ENCODE measurements at regions of chr6 and their contacts with region 1.

Region 1: GRCh38 chr6:26249957-26250697 is 114.9 kb upstream of the BTN3A2 start:
- DNase-seq: peak; percentile 74
- ATAC-seq: peak; percentile 53
- H3K4me3 Mint-ChIP-seq: peak overlapping the region; percentile 96
- H3K27ac Mint-ChIP-seq: peak overlapping the region; percentile 98
- H3K4me1 Mint-ChIP-seq: peaks cover 27% of the 10 kb centered on the region
- H3K27me3 Mint-ChIP-seq: no peaks in the 10 kb centered on the region
- CTCF ChIP-seq: no peak

Region 2: GRCh38 chr6:26031595-26032339 is 218.4 kb before region 1 on chr6:
- CTCF ChIA-PET with region 1: no interaction called
- POLR2A ChIA-PET with region 1: interaction called, 33 read pairs
- DNase-seq: peak; percentile 80
- ATAC-seq: peak; percentile 67
- H3K4me3 Mint-ChIP-seq: peak overlapping the region; percentile 91
- H3K27ac Mint-ChIP-seq: peak overlapping the region; percentile 100
- H3K4me1 Mint-ChIP-seq: peaks cover 59% of the 10 kb centered on the region
- H3K27me3 Mint-ChIP-seq: no peaks in the 10 kb centered on the region
- CTCF ChIP-seq: no peak

Region 3: DNA sequence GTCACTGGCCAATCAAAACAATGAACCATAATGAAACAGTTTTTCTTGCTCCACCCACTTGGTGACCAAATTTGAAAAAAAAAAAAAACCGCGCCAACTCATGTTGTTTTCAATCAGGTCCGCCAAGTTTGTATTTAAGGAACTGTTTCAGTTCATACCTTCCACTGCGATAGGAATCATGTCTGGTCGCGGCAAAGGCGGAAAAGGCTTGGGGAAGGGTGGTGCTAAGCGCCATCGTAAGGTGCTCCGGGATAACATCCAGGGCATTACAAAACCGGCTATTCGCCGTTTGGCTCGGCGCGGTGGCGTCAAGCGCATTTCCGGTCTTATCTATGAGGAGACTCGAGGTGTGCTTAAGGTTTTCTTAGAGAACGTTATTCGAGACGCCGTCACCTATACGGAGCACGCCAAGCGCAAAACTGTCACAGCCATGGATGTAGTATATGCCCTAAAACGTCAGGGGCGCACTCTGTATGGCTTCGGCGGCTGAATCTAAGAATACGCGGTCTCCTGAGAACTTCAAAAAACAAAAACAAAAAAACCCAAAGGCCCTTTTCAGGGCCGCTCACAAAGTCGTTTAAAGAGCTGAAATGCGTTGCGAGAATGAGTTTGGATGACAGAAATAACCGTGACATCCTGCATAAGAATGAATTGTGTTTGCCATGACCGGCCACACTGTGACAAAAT is 146.2 kb before region 1 on chr6:
- CTCF ChIA-PET with region 1: no interaction called
- POLR2A ChIA-PET with region 1: interaction called, 18 read pairs
- DNase-seq: peak; percentile 73
- ATAC-seq: peak; percentile 79
- H3K4me3 Mint-ChIP-seq: peak overlapping the region; percentile 84
- H3K27ac Mint-ChIP-seq: peak overlapping the region; percentile 98
- H3K4me1 Mint-ChIP-seq: peaks cover 23% of the 10 kb centered on the region
- H3K27me3 Mint-ChIP-seq: no peaks in the 10 kb centered on the region
- CTCF ChIP-seq: no peak

Region 4: DNA sequence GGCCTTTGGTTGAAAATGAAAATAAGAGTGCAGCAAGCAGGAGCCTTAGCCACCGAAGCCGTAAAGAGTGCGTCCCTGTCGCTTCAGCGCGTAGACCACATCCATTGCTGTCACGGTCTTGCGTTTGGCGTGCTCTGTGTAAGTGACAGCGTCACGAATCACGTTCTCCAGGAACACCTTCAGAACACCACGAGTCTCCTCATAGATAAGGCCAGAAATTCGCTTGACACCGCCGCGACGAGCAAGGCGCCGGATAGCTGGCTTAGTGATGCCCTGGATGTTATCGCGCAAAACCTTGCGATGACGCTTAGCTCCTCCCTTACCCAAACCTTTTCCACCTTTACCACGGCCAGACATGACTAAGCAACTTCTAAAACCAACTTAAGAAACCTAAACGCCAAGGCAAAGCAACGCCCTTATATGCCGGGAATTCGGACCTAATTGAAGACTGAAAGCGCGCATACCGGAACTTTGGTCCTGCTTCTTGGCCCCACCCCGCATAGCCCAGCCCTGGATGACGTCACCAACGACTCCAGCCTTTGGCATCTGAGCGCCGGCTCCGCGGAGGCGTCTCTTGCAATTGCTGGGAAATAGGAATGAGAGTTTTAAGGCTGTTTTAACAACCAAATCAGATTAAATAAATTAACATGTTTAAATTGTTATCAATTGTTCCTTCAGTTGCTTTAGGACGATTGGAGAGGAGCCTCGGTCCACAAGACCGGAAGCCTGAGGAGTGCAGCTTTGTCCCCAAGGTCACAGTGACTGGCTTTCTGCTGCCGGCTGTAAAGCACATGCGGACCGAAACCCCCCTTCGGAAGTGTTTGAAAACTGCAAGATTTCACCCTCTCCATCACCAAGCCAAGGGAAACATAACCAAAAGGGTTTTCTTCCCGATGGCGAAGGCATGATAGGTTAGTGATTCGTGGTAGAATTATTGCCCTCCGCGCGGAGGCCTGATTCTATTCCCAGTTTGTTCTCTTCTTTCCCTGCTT is 35.3 kb after region 1 on chr6:
- CTCF ChIA-PET with region 1: interaction called, 4 read pairs
- POLR2A ChIA-PET with region 1: interaction called, 37 read pairs
- DNase-seq: peak; percentile 96
- ATAC-seq: peak; percentile 73
- H3K4me3 Mint-ChIP-seq: peak overlapping the region; percentile 97
- H3K27ac Mint-ChIP-seq: peak overlapping the region; percentile 100
- H3K4me1 Mint-ChIP-seq: peaks cover 16% of the 10 kb centered on the region
- H3K27me3 Mint-ChIP-seq: peaks cover 4% of the 10 kb centered on the region
- CTCF ChIP-seq: no peak

Region 5: GRCh38 chr6:27146706-27147505 is 896.8 kb after region 1 on chr6:
- CTCF ChIA-PET with region 1: no interaction called
- POLR2A ChIA-PET with region 1: interaction called, 32 read pairs
- DNase-seq: peak; percentile 80
- ATAC-seq: peak; percentile 67
- H3K4me3 Mint-ChIP-seq: no peak overlapping the region
- H3K27ac Mint-ChIP-seq: no peak overlapping the region
- H3K4me1 Mint-ChIP-seq: peaks cover 23% of the 10 kb centered on the region
- H3K27me3 Mint-ChIP-seq: no peaks in the 10 kb centered on the region
- CTCF ChIP-seq: no peak

Region 6: GRCh38 chr6:27864906-27865849 is 1615.1 kb after region 1 on chr6:
- CTCF ChIA-PET with region 1: no interaction called
- POLR2A ChIA-PET with region 1: interaction called, 21 read pairs
- DNase-seq: peak; percentile 73
- ATAC-seq: peak; percentile 51
- H3K4me3 Mint-ChIP-seq: peak overlapping the region; percentile 97
- H3K27ac Mint-ChIP-seq: peak overlapping the region; percentile 100
- H3K4me1 Mint-ChIP-seq: peaks cover 25% of the 10 kb centered on the region
- H3K27me3 Mint-ChIP-seq: peaks cover 4% of the 10 kb centered on the region; the same call in 1 of the 2 replicates
- CTCF ChIP-seq: no peak